B cell (primary cell): ENCODE measurements at regions of chr11 and their contacts with region 1.

Region 1: DNA sequence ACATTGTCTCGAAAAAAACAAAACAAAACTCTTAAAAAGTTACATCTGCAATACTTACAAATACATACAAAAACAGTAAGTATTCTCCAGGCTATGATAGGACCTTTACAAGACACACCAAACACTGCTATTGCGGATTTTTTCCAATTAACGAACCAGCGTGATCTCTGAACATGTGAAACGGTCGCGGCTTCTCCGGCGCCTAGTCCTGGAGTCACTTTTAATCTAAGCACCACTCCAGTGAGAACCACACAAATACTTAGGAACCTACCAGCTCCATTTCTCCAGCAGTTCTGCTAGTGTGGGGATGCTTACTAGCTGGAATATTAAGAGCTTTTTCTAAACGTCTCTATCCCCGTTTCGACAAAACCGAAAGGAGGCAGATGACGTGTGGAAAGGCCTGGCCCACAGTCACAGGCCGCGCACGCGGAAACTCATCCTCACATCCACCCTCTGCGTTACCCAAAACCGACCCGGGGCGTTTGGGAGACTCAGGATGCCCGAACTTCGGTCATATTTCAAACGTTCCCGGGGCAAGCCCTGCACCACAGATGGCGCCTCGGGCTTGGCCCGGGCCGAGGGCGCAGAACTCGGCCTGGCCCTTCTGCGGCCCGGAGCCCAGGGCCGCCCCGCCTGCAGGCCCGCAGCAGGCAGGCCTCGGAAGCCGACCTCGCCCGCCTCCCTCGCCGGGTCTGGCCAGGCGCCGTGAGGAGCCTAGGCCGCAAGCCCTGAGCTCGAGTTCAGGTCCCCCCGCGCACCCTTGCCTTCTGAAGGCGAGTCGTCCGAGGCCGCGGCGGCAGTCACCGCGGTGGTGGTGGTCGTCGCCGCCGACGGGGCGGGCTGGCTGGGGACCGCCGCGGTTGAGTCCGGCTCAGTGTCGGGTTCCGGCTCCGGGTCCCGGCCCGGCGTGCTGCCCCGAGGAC is 575 bp downstream of the FNBP4 start:
- DNase-seq: peak; percentile 88
- ATAC-seq: peak; percentile 15
- H3K4me3 ChIP-seq: peak overlapping the region; percentile 49 to 88 (median 78)
- H3K4me3 Mint-ChIP-seq: peak overlapping the region; percentile 97
- H3K27ac ChIP-seq: peak overlapping the region; percentile 91 to 97
- H3K27ac Mint-ChIP-seq: peak overlapping the region; percentile 100
- H3K4me1 ChIP-seq: peaks cover 19 to 24% of the 10 kb centered on the region in 2 donors
- H3K4me1 Mint-ChIP-seq: peaks cover 26% of the 10 kb centered on the region
- H3K27me3 ChIP-seq: no peaks in the 10 kb centered on the region
- H3K27me3 Mint-ChIP-seq: no peaks in the 10 kb centered on the region
- CTCF ChIP-seq: no peak

Region 2: DNA sequence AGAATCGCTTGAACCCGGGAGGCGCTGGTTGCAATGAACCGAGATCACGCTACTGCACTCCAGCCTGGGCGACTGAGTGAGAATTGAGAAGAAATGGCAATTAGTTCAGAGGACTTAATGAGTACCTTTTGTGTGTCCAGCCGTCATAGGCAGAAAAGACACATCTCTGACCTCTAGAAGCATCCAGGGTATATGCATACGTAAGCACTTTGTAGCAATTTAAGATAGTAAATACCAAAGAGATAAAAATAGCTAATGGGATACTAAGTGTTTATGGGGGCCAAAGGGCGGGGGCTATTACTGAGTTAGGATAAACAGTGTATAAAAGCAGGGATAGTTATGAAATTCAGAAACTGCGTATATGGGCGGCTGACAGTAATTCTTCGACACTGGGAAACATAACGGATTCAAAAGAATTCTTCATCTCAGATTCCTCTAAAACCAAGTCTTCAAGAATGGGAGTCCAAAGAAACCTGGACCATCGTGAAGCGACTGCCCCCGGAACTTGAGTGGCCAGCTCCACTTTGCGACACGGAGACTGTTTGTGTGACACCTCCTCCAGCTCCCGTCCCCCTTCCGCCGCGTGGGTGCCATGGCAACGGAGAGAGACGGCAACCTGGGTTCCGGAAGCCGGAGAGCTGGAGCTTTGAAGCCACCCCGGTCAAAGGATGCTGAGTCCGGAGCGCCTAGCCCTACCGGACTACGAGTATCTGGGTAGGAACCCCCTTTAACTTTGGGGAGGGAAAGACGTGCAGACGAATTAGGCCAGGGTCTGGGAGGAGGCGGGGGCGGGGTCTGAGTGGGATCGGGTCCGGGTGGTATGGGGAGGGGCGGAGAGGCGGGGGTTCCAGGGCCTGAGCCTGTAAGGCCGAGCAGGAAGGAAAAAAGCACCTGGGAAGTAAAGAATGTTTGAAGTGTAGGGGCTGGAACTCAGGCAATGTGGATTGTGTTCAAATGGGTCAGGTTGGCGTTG is 830.1 kb before region 1 on chr11 and contains the start of gene CSTPP1:
- CTCF ChIA-PET with region 1: no interaction called
- POLR2A ChIA-PET with region 1: no interaction called
- intact Hi-C with region 1: loop called (anchors 5 kb)
- DNase-seq: peak; percentile 93
- ATAC-seq: peak; percentile 90
- H3K4me3 ChIP-seq: peak within 1 kb of the TSS; percentile 38 to 67 (median 64)
- H3K4me3 Mint-ChIP-seq: peak within 1 kb of the TSS; percentile 90
- H3K27ac ChIP-seq: peak within 1 kb of the TSS; percentile 30 to 69
- H3K27ac Mint-ChIP-seq: peak within 1 kb of the TSS; percentile 85
- H3K4me1 ChIP-seq: peaks cover 5 to 12% of the 10 kb centered on the region in 2 donors
- H3K4me1 Mint-ChIP-seq: peaks cover 18% of the 10 kb centered on the region
- H3K27me3 ChIP-seq: peaks cover 0 to 5% (median 0%) of the 10 kb centered on the region in 4 experiments
- H3K27me3 Mint-ChIP-seq: peaks cover 13% of the 10 kb centered on the region
- CTCF ChIP-seq: no peak
- total RNA-seq, gene CSTPP1: 27.4 and 29.0 TPM in 2 replicates

Region 3: DNA sequence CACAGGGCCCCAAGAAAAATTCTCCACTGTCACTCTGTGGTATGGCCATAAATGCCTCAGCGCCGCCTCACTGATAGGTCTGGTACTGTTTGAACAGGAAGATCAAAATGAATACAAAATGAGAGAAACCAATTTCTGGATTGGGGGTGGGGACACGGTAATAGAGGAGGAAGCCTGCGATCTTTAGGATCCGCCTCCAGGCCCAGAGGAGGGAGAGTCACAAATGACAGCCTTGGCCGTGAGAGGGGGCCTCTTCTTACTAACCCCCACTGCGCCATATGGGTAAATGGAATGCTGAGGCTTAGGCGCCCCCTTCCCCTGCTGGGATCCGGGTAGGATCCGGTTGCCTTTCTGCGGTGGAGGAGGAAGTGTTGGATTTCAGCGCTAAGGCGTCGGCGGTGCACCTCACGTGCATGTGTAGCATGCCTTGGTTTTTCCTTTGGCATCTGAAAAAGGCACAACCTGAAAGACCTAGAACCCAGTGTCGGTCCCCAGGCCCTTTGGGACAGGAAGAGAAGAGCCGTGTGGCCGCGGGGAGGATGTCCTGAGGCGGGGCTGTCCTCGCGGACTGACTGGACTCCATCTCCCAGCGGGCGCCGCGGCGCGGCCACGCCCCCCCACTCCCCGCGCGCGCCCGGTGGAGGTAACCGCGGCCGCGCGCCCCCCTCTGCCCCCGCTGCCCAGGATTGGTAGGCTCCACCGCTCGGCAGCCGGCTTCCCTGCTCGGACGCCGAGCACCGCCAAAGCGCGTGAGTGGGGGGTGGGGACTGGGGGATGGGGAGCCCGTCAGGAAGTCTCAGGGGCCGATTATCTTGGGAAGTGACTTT is 497.4 kb before region 1 on chr11:
- CTCF ChIA-PET with region 1: no interaction called
- POLR2A ChIA-PET with region 1: no interaction called
- intact Hi-C with region 1: loop called (anchors 2 kb)
- DNase-seq: peak; percentile 92
- ATAC-seq: peak; percentile 67
- H3K4me3 ChIP-seq: peak overlapping the region; percentile 58 to 89 (median 84)
- H3K4me3 Mint-ChIP-seq: peak overlapping the region; percentile 89
- H3K27ac ChIP-seq: peak overlapping the region; percentile 90 to 92
- H3K27ac Mint-ChIP-seq: peak overlapping the region; percentile 94
- H3K4me1 ChIP-seq: peaks cover 47 to 48% of the 10 kb centered on the region in 2 donors
- H3K4me1 Mint-ChIP-seq: peaks cover 55% of the 10 kb centered on the region
- H3K27me3 ChIP-seq: no peaks in the 10 kb centered on the region
- H3K27me3 Mint-ChIP-seq: no peaks in the 10 kb centered on the region
- CTCF ChIP-seq: no peak

Region 4: DNA sequence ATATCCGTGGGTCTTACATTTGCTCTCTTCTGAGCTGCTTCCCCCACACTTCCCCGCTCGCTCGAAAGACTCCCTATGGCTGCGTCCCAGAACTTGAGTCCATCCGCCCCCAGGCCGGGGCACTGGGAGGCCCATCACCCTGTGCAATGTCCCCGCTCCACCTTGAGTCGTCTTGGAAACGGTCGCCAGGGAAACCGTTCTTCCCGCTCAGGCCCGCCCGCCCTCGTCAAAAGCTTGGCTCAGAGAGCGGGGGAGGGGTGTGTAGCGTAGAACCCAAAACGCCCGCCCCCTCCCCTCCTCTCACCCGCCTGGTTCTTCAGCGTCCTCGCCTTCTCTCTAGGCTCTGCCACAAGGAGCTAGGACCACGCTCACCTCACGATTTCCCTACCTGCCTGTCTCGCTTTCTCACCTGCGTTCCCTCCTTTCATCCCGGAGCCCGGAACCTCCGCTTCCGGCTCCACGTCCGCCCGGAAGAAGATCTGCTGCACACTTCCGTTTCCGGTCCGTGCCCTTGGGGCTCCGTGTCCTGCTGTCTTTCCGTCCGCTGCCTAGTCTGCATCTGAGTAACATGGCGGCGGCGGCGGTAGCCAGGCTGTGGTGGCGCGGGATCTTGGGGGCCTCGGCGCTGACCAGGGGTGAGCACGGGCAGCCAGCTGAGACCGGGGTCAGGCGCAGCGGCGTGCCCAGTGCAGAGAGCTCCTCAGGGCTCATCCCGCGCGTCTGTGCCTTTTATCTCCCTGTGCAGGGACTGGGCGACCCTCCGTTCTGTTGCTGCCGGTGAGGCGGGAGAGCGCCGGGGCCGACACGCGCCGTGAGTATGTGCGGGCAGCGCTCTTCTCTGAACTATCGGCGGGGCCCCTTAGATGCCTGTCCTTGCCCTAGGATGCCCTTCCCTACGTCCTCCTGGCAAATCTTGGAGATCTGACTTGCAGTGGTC is 187.8 kb before region 1 on chr11 and contains the starts of genes KBTBD4 and NDUFS3:
- CTCF ChIA-PET with region 1: no interaction called
- POLR2A ChIA-PET with region 1: no interaction called
- intact Hi-C with region 1: loop called (anchors 5 kb)
- DNase-seq: peak; percentile 94
- ATAC-seq: peak; percentile 95
- H3K4me3 ChIP-seq: peak within 1 kb of the TSS; percentile 61 to 91 (median 87)
- H3K4me3 Mint-ChIP-seq: peak within 1 kb of the TSS; percentile 96
- H3K27ac ChIP-seq: peak within 1 kb of the TSS; percentile 78 to 81
- H3K27ac Mint-ChIP-seq: peak within 1 kb of the TSS; percentile 98
- H3K4me1 ChIP-seq: peaks cover 25 to 26% of the 10 kb centered on the region in 2 donors
- H3K4me1 Mint-ChIP-seq: peaks cover 32% of the 10 kb centered on the region
- H3K27me3 ChIP-seq: no peaks in the 10 kb centered on the region
- H3K27me3 Mint-ChIP-seq: no peaks in the 10 kb centered on the region
- CTCF ChIP-seq: no peak
- total RNA-seq, gene KBTBD4: 20.3 and 20.7 TPM in 2 replicates
- total RNA-seq, gene NDUFS3: 76.2 and 79.5 TPM in 2 replicates

Region 5: DNA sequence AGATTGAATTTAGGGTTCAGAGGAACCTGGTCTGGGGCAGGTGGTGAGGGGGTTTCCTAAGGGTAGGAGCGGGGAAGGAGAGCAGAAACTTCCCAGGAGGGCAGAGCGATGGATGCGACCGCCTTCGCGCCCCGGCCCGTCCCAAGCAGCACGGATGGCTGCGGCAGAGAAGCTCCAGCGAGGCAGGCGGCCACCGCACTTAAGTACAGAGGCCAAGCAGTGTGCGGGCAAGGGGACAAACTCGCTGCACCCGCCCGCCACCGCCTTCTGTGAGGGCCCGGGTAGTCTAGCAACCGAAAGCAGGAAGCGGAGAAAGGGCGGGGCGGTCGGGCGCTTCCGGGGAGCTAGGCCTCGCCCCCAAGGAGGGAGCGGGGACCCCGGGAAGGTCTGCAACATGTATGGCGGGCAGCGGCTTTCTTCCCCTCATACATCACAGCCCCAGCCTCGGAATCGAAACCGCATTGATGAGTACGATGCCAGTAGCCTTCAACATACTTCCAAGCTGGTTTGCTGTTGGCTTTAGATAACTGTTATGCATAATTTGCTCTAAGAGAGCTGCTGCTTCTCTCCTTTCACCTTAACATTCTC is 51.4 kb before region 1 on chr11 and contains the start of gene AGBL2:
- CTCF ChIA-PET with region 1: interaction called, 3 read pairs
- POLR2A ChIA-PET with region 1: interaction called, 3 read pairs
- intact Hi-C with region 1: loop called (anchors 1 kb)
- DNase-seq: peak; percentile 88
- ATAC-seq: peak; percentile 99
- H3K4me3 ChIP-seq: peak within 1 kb of the TSS; percentile 81 to 95 (median 94)
- H3K4me3 Mint-ChIP-seq: peak within 1 kb of the TSS; percentile 97
- H3K27ac ChIP-seq: peak within 1 kb of the TSS; percentile 84 to 97
- H3K27ac Mint-ChIP-seq: peak within 1 kb of the TSS; percentile 97
- H3K4me1 ChIP-seq: peaks cover 11 to 15% of the 10 kb centered on the region in 2 donors
- H3K4me1 Mint-ChIP-seq: peaks cover 14% of the 10 kb centered on the region
- H3K27me3 ChIP-seq: no peaks in the 10 kb centered on the region
- H3K27me3 Mint-ChIP-seq: no peaks in the 10 kb centered on the region
- CTCF ChIP-seq: no peak
- total RNA-seq, gene AGBL2: 13.6 and 17.0 TPM in 2 replicates

Region 6: GRCh38 chr11:47791774-47792430 is 25.3 kb after region 1 on chr11:
- CTCF ChIA-PET with region 1: no interaction called
- POLR2A ChIA-PET with region 1: no interaction called
- intact Hi-C with region 1: no loop called
- DNase-seq: no peak
- ATAC-seq: no peak
- H3K4me3 ChIP-seq: no peak overlapping the region
- H3K4me3 Mint-ChIP-seq: no peak overlapping the region
- H3K27ac ChIP-seq: no peak overlapping the region
- H3K27ac Mint-ChIP-seq: no peak overlapping the region
- H3K4me1 ChIP-seq: no peaks in the 10 kb centered on the region
- H3K4me1 Mint-ChIP-seq: no peaks in the 10 kb centered on the region
- H3K27me3 ChIP-seq: no peaks in the 10 kb centered on the region
- H3K27me3 Mint-ChIP-seq: no peaks in the 10 kb centered on the region
- CTCF ChIP-seq: no peak

Region 7: DNA sequence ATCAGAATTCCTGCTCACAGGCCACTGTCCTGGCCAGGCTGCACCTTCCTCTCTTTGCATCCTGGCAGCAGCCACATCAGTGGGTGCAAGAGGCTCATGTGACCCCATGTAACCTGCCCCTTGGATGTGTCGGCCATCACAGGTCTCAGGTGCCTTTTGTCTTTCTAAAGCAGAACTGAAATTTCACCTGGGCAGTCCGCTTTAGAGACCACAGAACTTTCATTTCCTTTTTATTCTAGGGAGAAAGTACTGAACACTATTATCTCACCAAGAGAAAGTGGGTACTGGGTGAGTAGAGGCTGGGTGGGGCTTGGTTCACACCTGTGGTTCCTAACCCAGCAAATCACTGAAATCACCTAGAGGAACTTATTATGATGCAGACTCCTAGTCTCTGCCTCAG is 133.2 kb after region 1 on chr11:
- CTCF ChIA-PET with region 1: no interaction called
- POLR2A ChIA-PET with region 1: no interaction called
- intact Hi-C with region 1: loop called (anchors 5 kb)
- DNase-seq: peak; percentile 91
- ATAC-seq: peak; percentile 93
- H3K4me3 ChIP-seq: no peak overlapping the region
- H3K4me3 Mint-ChIP-seq: peak overlapping the region; percentile 61
- H3K27ac ChIP-seq: peak overlapping the region; percentile 76 to 88
- H3K27ac Mint-ChIP-seq: peak overlapping the region; percentile 96
- H3K4me1 ChIP-seq: peaks cover 33 to 38% of the 10 kb centered on the region in 2 donors
- H3K4me1 Mint-ChIP-seq: peaks cover 38% of the 10 kb centered on the region
- H3K27me3 ChIP-seq: no peaks in the 10 kb centered on the region
- H3K27me3 Mint-ChIP-seq: no peaks in the 10 kb centered on the region
- CTCF ChIP-seq: no peak